Aorta (tissue), 5 donors: ENCODE measurements at regions of chr21 and their contacts with region 1.

Region 1: GRCh38 chr21:38306433-38307141 is 49.8 kb downstream of the KCNJ15 start:
- DNase-seq: no peak
- ATAC-seq: no peak
- H3K4me3 ChIP-seq: no peak overlapping the region
- H3K27ac ChIP-seq: no peak overlapping the region
- H3K4me1 ChIP-seq: peaks cover 2 to 5% of the 10 kb centered on the region in 2 donors
- H3K27me3 ChIP-seq: no peaks in the 10 kb centered on the region

Region 2: GRCh38 chr21:37087188-37087587 is 1219.4 kb before region 1 on chr21:
- intact Hi-C with region 1: no loop called
- DNase-seq: no peak
- ATAC-seq: no peak
- H3K4me3 ChIP-seq: no peak overlapping the region
- H3K27ac ChIP-seq: no peak overlapping the region
- H3K4me1 ChIP-seq: peaks cover 0 to 8% of the 10 kb centered on the region in 2 donors
- H3K27me3 ChIP-seq: no peaks in the 10 kb centered on the region

Region 3: DNA sequence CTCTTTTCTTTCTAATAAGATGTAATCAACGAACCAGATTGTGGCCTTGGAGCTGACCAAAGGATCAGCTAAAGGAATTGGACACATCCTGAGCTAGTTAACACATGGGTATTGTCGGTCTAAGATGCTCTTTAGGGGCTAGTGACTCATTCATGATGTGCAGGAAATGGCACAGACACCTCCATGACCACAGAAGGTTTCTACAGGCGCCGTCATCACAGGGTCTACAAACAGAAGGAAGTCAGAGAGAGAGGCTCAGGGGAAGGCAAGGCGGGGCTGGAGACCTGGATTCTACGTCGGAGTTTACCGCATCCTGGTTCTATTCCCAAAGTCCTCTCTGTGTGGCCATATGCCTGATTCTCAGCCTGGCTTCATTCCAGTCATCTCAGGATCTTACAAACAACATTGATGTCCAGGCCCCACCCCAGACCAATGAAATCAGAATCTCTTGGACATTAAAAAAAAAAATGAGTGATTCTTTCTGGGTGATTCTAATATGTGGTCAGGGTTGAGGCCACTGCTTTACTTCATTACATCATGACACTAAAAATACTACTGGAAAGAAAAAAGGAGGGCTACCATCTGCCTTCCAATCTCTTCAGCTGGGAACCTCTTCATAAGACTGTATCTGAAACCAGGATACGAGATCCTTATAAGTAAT is 61.6 kb before region 1 on chr21:
- intact Hi-C with region 1: loop called in 1 of 2 experiments (anchors 10 kb)
- DNase-seq: no peak
- ATAC-seq: no peak
- H3K4me3 ChIP-seq: no peak overlapping the region
- H3K27ac ChIP-seq: no peak overlapping the region
- H3K4me1 ChIP-seq: peaks cover 0 to 3% of the 10 kb centered on the region in 2 donors
- H3K27me3 ChIP-seq: no peaks in the 10 kb centered on the region

Region 4: DNA sequence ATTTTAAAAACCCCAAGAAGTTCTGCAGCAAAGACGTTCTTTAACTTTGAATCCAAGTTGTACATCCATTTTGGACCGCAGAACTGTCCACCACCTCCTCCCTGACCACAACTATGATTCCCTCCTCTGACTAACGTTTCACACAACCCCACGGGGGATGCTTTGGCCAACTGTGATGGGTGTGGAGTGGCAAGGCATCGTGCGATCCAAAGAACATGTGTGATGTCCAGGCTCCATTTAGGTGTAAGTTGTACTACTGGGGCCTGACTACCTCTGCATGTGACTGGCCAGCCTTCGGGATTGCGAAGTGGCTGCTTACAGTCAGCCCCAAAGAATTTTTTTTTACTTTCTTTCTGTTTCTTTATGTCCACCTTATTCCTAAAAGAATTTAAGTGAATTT is 43.1 kb before region 1 on chr21:
- intact Hi-C with region 1: loop called (anchors 5 kb)
- DNase-seq: peak in 1 of 2 donors; percentile 57
- ATAC-seq: no peak
- H3K4me3 ChIP-seq: no peak overlapping the region
- H3K27ac ChIP-seq: no peak overlapping the region
- H3K4me1 ChIP-seq: peaks cover 2 to 6% of the 10 kb centered on the region in 2 donors
- H3K27me3 ChIP-seq: no peaks in the 10 kb centered on the region

Region 5: DNA sequence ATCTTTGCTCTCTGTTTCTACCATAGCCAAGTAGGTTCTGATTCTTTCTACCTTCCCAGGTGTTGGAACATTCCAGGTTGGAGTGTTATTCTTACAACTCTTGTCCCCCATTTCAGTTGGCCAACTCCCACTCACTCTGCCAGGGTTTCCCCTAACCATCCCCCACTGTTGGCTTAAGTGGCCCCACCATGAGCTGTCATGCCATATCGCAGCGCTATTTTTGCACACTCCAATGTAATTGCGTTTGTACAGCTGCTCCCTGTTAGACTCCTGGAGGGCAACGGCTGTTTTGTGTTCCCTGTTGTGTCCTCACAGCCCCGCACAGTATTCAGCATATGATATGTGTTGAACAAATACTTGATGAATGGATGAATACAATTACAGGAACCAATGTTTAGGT is 381.5 kb after region 1 on chr21:
- intact Hi-C with region 1: no loop called
- DNase-seq: no peak
- ATAC-seq: no peak
- H3K4me3 ChIP-seq: no peak overlapping the region
- H3K27ac ChIP-seq: no peak overlapping the region
- H3K4me1 ChIP-seq: peaks cover 0 to 2% of the 10 kb centered on the region in 2 donors
- H3K27me3 ChIP-seq: no peaks in the 10 kb centered on the region